Caco-2 (cell line): ENCODE measurements at regions of chr17 and their contacts with region 1.

Region 1: DNA sequence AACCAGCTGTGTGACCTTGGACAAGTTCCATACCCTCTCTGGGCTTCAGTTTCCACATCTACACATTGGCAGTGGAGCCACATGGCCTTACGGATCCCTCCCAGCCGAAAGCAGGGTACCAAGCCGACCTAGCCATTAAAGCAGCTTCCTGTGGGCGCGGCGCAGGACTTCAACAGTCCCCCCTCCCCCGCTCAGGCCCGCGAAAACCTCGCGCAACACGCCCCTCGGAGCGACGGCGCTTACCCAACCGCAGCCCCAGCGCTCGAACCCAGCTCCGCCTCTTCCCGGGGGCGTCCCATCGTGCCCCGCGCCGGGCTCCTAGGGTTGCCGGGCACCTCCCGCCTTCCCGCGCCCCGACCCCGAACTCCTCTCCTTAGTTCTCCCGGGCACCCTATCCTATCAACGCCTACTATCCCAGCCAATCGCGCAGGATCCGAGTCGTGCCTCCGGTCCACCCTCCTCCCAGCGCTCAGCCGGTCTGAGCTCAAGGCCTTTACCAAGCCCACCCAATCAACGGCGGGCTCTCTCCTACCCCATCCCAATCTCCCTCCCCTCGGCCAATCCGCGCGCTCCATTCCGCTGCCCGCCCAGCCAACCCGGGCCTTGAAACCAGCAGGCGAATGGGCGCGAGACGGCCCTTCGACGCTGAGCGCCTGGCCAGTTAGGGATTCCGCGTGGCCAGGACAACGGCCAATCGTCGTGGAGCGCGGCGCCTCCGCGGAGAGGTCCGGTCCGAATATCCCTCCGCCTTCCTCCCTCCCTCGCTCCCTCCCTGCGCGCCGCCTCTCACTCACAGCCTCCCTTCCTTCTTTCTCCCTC is at the start of gene KPNB1:
- DNase-seq: peak; percentile 100
- H3K4me3 ChIP-seq: peak within 1 kb of the TSS; percentile 92
- H3K4me3 Mint-ChIP-seq: peak within 1 kb of the TSS; percentile 87
- H3K27ac Mint-ChIP-seq: peak within 1 kb of the TSS; percentile 83
- H3K4me1 ChIP-seq: peaks cover 29% of the 10 kb centered on the region
- H3K4me1 Mint-ChIP-seq: peaks cover 27% of the 10 kb centered on the region
- H3K27me3 ChIP-seq: no peaks in the 10 kb centered on the region
- H3K27me3 Mint-ChIP-seq: no peaks in the 10 kb centered on the region
- CTCF ChIP-seq: peak in 1 of 2 experiments; percentile 2
- total RNA-seq, gene KPNB1: 967 and 1,072 TPM in 2 replicates

Region 2: GRCh38 chr17:47615766-47616424 is 33.5 kb before region 1 on chr17:
- CTCF ChIA-PET with region 1: interaction called, 24 read pairs
- POLR2A ChIA-PET with region 1: interaction called, 10 read pairs
- intact Hi-C with region 1: loop called (anchors 2 kb)
- DNase-seq: peak in 1 of 2 experiments; percentile 70
- H3K4me3 ChIP-seq: no peak overlapping the region
- H3K4me3 Mint-ChIP-seq: no peak overlapping the region
- H3K27ac Mint-ChIP-seq: no peak overlapping the region
- H3K4me1 ChIP-seq: peaks cover 13% of the 10 kb centered on the region
- H3K4me1 Mint-ChIP-seq: peaks cover 16% of the 10 kb centered on the region
- H3K27me3 ChIP-seq: no peaks in the 10 kb centered on the region
- H3K27me3 Mint-ChIP-seq: no peaks in the 10 kb centered on the region
- CTCF ChIP-seq: peak; percentile 79 to 97

Region 3: DNA sequence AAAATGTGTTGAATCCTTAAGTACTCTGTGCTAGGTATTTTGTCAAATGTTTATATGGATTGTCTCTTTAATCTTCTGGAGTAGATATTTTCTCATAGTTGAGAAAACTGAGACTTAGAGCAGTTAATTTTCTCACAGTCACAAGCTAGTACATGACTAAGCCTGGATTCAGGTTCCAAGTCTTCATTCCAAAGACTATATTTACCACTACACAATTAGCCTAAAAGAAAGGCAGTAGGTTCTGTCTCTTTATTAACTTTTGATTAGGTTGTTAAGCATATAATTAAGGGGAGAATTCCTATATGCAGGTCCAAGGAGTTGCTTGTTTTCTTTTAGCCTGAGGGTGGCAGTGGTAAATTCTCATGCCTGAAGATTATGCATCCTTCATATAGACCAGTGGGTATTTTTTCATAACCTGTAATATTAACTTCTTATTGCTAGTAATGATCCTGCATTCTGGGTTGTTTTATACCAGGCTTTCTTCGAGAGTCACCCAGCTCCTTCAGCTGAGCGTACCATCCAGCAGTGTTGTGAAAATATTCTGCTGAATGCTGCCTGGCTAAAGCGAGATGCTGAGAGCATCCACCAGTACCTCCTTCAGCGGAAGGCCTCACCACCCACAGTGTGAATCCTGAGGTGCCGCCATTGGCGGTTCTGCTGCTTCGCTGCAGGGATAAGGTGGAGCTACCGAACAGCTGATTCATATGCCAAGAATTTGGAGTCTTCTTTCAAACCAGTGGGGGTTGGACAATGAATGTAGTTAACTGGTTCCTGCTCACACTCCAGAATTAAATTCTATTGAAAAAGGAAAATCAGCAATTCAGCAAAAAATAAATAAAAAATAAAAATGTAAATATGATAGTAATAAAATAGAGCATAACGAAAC is 27.8 kb before region 1 on chr17:
- CTCF ChIA-PET with region 1: interaction called, 24 read pairs
- POLR2A ChIA-PET with region 1: interaction called, 6 read pairs
- intact Hi-C with region 1: loop called (anchors 1 kb)
- DNase-seq: peak; percentile 77 to 81
- H3K4me3 ChIP-seq: no peak overlapping the region
- H3K4me3 Mint-ChIP-seq: peak overlapping the region; percentile 39
- H3K27ac Mint-ChIP-seq: peak overlapping the region; percentile 42
- H3K4me1 ChIP-seq: peaks cover 16% of the 10 kb centered on the region
- H3K4me1 Mint-ChIP-seq: peaks cover 32% of the 10 kb centered on the region
- H3K27me3 ChIP-seq: no peaks in the 10 kb centered on the region
- H3K27me3 Mint-ChIP-seq: no peaks in the 10 kb centered on the region
- CTCF ChIP-seq: peak in 1 of 2 experiments; percentile 5

Region 4: GRCh38 chr17:47720754-47721533 is 71.6 kb after region 1 on chr17:
- CTCF ChIA-PET with region 1: no interaction called
- POLR2A ChIA-PET with region 1: no interaction called
- intact Hi-C with region 1: no loop called
- DNase-seq: peak in 1 of 2 experiments; percentile 60
- H3K4me3 ChIP-seq: no peak overlapping the region
- H3K4me3 Mint-ChIP-seq: no peak overlapping the region
- H3K27ac Mint-ChIP-seq: no peak overlapping the region
- H3K4me1 ChIP-seq: peaks cover 10% of the 10 kb centered on the region; the same call in 1 of the 2 replicates
- H3K4me1 Mint-ChIP-seq: peaks cover 6% of the 10 kb centered on the region
- H3K27me3 ChIP-seq: peaks cover 9% of the 10 kb centered on the region
- H3K27me3 Mint-ChIP-seq: peaks cover 29% of the 10 kb centered on the region
- CTCF ChIP-seq: peak in 1 of 2 experiments; percentile 24